ENCODE measurements at regions of chr4 and their contacts with region 1.

Region 1: DNA sequence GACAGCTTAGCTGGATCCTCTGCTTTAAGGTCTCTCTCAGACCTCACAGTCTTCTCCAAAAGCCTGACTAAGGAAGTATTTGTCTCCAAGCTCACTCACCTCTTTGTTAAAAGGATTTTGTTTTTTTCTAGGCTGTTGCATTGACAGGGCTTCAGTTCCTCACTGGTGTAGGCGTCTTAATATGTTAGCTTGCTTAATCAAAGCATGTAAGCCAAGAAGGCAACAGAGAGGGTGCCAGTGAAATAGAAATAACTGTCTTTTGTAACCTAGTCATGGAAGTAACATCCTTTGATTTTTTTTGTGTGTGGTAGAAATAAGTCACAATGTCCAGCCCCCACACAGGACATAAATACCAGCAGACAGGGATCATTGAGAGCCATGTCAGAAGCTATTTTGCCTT is 58.8 kb downstream of the FIP1L1 start:
- DNase-seq: no peak
- H3K4me3 ChIP-seq: no peak overlapping the region
- CTCF ChIP-seq: no peak

Region 2: DNA sequence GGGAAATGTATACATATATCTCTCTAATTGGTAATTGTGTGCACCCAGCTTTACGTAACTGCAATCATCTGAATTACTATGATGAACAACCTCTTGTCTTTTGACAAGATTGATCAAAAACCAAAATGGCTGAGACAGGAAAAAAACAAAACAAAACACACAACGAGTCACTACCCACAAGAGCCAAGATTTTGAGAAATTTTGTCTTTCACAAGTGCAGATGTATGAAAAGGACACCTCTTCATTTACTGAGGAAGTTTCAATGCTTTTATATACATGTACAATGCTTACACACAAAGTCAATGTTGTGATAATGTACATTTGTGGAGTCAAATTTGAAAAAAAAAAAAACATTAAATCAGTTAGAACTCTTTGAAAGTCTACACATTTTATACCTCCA is 294.9 kb before region 1 on chr4:
- in situ Hi-C with region 1: no loop called
- DNase-seq: no peak
- H3K4me3 ChIP-seq: no peak overlapping the region
- CTCF ChIP-seq: no peak

Region 3: GRCh38 chr4:53380221-53380620 is 56.0 kb before region 1 on chr4:
- in situ Hi-C with region 1: loop called (anchors 5 kb)
- DNase-seq: no peak
- H3K4me3 ChIP-seq: no peak overlapping the region
- CTCF ChIP-seq: no peak

Region 4: GRCh38 chr4:53490965-53491622 is 54.8 kb after region 1 on chr4:
- in situ Hi-C with region 1: no loop called
- DNase-seq: peak; percentile 75
- H3K4me3 ChIP-seq: no peak overlapping the region
- CTCF ChIP-seq: peak; percentile 73

Region 5: DNA sequence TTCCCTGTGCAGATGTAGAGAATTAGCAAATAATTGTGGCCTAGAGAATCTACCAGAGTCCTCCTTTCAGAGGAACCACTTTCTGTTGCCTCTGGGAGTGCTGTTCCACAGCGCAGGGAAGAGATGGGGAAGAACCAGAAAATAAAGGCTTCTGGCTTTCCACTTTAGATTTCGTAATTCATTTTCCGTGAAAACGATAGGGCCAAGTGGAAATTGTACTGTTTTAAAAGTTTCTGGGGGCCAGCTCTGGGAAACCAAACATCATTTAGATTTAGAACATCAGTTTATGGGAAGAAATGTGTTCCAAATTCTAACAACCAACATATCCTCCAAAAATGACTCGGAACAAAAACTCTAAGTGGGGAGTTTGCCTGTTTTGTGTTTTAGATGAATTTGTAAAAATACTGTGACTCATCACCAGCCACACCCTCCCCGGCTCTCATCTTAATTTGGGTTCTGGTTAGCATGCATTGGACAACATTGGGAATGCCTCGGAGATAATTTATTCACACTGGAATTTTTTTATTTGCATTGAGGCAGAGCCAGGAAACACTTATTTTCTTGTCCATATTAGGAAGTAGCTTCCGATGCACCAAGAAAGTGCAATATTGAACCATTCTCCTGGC is 220.3 kb after region 1 on chr4:
- in situ Hi-C with region 1: no loop called
- DNase-seq: no peak
- H3K4me3 ChIP-seq: no peak overlapping the region
- CTCF ChIP-seq: peak; percentile 60

Region 6: GRCh38 chr4:53962516-53963225 is 526.4 kb after region 1 on chr4:
- in situ Hi-C with region 1: no loop called
- DNase-seq: peak; percentile 23
- H3K4me3 ChIP-seq: no peak overlapping the region
- CTCF ChIP-seq: no peak

Measured in astrocyte of the cerebellum (primary cell).